ENCODE measurements at regions of chr1 and their contacts with region 1.

Region 1: DNA sequence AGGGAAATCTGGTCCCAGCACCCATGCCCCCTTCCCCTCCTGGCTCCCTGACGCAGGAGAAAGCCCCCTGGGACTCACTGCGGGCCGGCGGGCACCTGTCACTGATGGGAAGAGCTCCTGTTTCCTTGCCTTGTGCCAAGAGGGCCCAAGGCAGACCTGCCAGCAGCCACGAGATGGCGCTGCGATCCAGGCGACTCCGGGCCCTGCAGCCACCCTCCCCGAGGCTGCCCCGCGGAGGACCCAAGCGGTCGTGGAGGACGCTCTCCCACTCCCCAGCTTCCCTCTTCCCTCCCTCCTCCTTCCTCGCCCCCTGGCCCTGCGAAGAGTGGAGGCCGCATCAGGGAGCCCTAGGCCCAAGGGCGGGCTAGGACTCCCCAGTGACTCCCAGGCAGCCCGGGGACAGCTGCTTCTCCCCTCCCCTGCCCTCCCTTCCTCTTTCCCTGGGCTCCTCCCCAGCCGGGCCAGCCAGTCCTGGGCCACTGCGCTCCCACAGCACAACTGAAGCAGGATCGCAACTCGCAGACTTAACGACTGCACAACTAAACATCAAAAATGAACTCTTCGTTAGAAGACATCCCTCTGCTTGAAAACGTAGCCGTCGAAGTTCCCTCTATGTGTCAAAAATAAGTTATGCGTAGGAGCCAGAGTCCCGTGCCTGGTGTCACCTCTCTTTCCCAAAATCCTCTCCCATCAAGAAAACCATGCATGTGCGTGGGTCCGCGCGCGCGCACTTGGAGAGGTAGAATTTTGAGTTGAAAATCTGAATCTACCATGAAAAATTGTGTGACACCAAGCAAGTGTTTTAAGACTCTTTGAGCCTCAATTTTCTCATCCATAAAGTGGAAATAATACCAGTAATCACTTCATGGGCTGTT is 34.2 kb downstream of the BATF3 start:
- DNase-seq: peak; percentile 83 to 92 (median 88)
- H3K4me3 ChIP-seq: peak overlapping the region; percentile 36 to 81 (median 68)
- H3K27ac ChIP-seq: no peak overlapping the region
- H3K4me1 ChIP-seq: peaks cover 1 to 19% (median 11%) of the 10 kb centered on the region in 4 experiments
- H3K27me3 ChIP-seq: peaks cover 0 to 2% (median 0%) of the 10 kb centered on the region in 5 experiments

Region 2: GRCh38 chr1:212608209-212608955 is 57.1 kb before region 1 on chr1 and contains the start of gene ATF3:
- CTCF ChIA-PET with region 1: interaction called, 27 read pairs
- POLR2A ChIA-PET with region 1: interaction called, 6 read pairs
- DNase-seq: peak; percentile 97 to 99 (median 99)
- H3K4me3 ChIP-seq: peak within 1 kb of the TSS; percentile 62 to 94 (median 78)
- H3K27ac ChIP-seq: peak within 1 kb of the TSS; percentile 41 to 86
- H3K4me1 ChIP-seq: peaks cover 3 to 37% (median 34%) of the 10 kb centered on the region in 4 experiments
- H3K27me3 ChIP-seq: peaks cover 18 to 56% (median 38%) of the 10 kb centered on the region in 5 experiments

Region 3: DNA sequence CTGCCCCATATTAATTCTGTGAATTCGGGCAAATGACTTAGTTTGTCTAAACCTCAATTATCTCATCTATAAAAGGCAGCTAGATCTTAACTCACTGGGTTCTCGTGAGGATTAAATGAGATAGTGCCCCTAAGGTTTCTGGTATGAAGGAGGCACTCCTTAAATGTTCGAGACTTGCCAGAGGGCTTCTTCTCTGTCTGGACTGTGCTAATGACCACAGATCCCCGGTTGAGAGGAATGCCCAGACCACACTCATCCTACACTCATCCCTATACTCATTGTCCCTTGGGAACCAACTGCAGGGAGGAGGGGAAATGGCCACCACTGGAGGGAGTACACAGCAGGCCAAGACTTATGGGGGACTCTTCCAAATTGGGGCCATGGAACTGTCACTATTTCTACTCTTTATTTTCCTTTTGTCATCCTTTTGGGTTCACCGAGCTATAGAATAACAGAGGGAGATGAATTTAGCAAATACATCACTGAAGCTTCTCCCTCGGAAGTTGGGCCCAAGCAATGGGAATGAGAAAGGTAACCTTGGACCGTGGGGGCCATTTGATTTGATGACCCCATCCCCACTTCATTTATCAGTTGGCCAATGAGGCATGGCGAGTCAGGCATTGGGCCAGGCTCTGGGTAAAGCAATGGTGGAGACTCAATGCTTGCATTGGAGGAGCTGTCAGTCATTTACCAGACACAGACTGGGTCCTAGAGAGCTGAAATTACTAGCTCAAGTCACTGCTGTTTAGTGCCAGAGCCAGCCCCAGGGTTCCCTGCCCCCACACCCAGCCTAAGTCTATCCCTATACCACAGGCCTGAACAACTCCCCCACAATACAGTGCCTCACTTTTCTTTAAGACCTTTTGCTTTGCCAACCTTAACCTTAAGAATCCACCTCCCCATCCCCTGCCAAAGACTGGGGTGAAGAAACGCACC is 51.8 kb before region 1 on chr1:
- CTCF ChIA-PET with region 1: interaction called, 27 read pairs
- POLR2A ChIA-PET with region 1: interaction called, 6 read pairs
- DNase-seq: no peak
- H3K4me3 ChIP-seq: no peak overlapping the region
- H3K27ac ChIP-seq: no peak overlapping the region
- H3K4me1 ChIP-seq: peaks cover 0 to 27% (median 18%) of the 10 kb centered on the region in 4 experiments
- H3K27me3 ChIP-seq: peaks cover 0 to 14% (median 2%) of the 10 kb centered on the region in 5 experiments

Region 4: GRCh38 chr1:212618501-212619405 is 46.7 kb before region 1 on chr1:
- CTCF ChIA-PET with region 1: interaction called, 13 read pairs
- POLR2A ChIA-PET with region 1: no interaction called
- DNase-seq: no peak
- H3K4me3 ChIP-seq: no peak overlapping the region
- H3K27ac ChIP-seq: no peak overlapping the region
- H3K4me1 ChIP-seq: peaks cover 0 to 27% (median 19%) of the 10 kb centered on the region in 4 experiments
- H3K27me3 ChIP-seq: no peaks in the 10 kb centered on the region

Region 5: GRCh38 chr1:212641956-212642355 is 23.5 kb before region 1 on chr1:
- CTCF ChIA-PET with region 1: interaction called, 26 read pairs
- POLR2A ChIA-PET with region 1: interaction called, 5 read pairs
- DNase-seq: no peak
- H3K4me3 ChIP-seq: no peak overlapping the region
- H3K27ac ChIP-seq: no peak overlapping the region
- H3K4me1 ChIP-seq: peaks cover 15 to 58% (median 39%) of the 10 kb centered on the region in 4 experiments
- H3K27me3 ChIP-seq: no peaks in the 10 kb centered on the region

Region 6: DNA sequence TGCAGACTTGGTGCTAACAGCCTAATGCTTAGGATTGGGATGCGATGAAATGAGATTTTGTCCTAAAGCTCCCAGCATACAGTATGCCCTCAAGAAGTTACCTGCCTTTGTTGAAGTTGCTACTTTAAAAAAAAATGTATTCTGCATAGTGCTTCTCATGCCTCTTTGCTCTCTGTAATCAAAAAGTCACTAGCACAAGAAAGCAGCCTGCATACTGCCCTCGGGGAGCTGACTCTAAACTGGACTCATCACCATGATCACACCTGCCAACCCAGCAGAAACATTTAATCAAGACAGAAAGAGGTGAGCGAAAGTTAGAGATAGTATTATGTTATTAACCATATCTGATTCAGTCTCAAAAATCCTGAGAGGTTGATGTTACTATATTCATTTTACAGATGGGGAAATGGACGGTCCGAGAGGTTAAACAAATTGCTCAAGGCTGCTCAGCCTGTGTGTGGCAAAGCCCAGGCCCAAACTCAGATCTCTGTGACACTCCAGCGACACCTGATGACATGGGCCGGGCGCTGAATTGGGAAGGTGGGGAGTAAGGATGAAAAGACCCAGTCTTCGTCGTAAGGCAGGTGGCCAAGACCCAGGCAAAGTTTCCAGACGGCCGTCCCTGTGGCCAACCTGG is 33.1 kb after region 1 on chr1:
- CTCF ChIA-PET with region 1: interaction called, 10 read pairs
- POLR2A ChIA-PET with region 1: no interaction called
- DNase-seq: no peak
- H3K4me3 ChIP-seq: peak overlapping the region in 6 of 7 experiments; percentile 19 to 74 (median 62)
- H3K27ac ChIP-seq: no peak overlapping the region
- H3K4me1 ChIP-seq: peaks cover 5 to 30% (median 27%) of the 10 kb centered on the region in 4 experiments
- H3K27me3 ChIP-seq: peaks cover 4 to 26% (median 11%) of the 10 kb centered on the region in 5 experiments

Region 7: GRCh38 chr1:212728606-212729005 is 63.1 kb after region 1 on chr1:
- CTCF ChIA-PET with region 1: no interaction called
- POLR2A ChIA-PET with region 1: no interaction called
- DNase-seq: no peak
- H3K4me3 ChIP-seq: no peak overlapping the region
- H3K27ac ChIP-seq: no peak overlapping the region
- H3K4me1 ChIP-seq: peaks cover 0 to 15% (median 5%) of the 10 kb centered on the region in 4 experiments
- H3K27me3 ChIP-seq: no peaks in the 10 kb centered on the region

Region 8: GRCh38 chr1:212782422-212783154 is 117.1 kb after region 1 on chr1:
- CTCF ChIA-PET with region 1: interaction called, 14 read pairs
- POLR2A ChIA-PET with region 1: no interaction called
- DNase-seq: peak; percentile 38 to 59 (median 52)
- H3K4me3 ChIP-seq: no peak overlapping the region
- H3K27ac ChIP-seq: no peak overlapping the region
- H3K4me1 ChIP-seq: no peaks in the 10 kb centered on the region
- H3K27me3 ChIP-seq: no peaks in the 10 kb centered on the region